ENCODE measurements at regions of chr18 and their contacts with region 1.

Region 1: DNA sequence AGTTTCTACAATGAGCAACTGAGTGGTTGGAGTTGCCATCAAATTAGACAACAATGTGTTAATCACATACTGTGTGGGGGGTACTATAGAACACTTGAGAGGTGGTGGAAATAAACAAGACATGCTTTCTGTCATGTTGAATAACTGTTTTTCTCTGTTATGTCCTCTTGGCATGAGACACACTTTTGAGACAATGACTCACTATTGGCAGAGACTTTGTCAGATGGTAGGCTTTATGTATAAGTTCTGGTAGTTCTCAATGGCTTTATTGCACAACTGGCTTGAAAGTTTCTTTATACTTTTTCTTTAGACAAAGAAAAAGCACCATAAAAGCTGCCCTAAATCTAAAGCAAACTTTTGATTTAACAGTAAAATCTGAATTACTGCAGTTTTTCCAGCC is 578.7 kb downstream of the ADCYAP1 start:
- DNase-seq: no peak
- H3K4me3 ChIP-seq: no peak overlapping the region
- H3K27ac ChIP-seq: no peak overlapping the region
- H3K4me1 ChIP-seq: no peaks in the 10 kb centered on the region
- CTCF ChIP-seq: no peak

Region 2: GRCh38 chr18:1425679-1426078 is 57.7 kb before region 1 on chr18:
- CTCF ChIA-PET with region 1: no interaction called
- POLR2A ChIA-PET with region 1: no interaction called
- intact Hi-C with region 1: loop called (anchors 10 kb)
- DNase-seq: no peak
- H3K4me3 ChIP-seq: no peak overlapping the region
- H3K27ac ChIP-seq: no peak overlapping the region
- H3K4me1 ChIP-seq: no peaks in the 10 kb centered on the region
- CTCF ChIP-seq: no peak

Measured in OCI-LY7 (cell line).